Endothelial cell of umbilical vein (primary cell): ENCODE measurements at regions of chr5 and their contacts with region 1.

Region 1: DNA sequence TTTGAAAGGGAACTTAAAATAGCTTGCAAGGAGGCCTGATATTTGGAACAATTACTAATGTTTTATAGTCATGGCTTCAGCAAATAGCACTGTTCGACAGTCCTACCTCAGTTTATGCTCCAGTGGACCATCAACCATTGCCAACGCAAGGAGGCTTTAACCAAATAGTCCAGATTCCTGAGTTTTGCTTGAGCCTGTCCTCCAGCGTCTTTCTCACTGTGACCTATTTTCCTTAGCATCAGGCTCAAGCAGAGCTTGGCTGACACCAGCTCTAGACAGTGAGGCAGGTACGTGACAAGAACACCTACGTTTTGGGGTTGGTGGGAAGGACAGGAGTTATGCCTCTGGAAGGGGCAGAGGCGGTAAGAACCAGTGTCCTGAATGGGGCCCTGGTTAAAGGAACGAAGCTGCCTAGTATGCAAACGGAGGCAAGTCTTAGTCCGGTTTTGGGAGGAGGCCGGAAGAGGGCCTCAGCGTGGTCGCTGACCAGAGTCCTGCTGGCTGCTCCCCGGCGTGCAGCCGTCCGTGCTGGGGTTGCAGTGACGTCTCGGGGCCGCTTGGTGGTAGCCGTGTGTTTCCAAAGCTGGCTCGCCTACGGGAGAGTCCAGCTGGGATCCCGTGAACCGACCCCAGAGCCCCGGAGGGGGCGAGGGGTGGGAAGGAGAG is 998 bp upstream of the FGF18 start:
- DNase-seq: peak; percentile 69
- H3K4me3 ChIP-seq: peak overlapping the region in 1 of 3 experiments; percentile 23
- H3K27ac ChIP-seq: no peak overlapping the region
- H3K4me1 ChIP-seq: peaks cover 13% of the 10 kb centered on the region
- H3K27me3 ChIP-seq: peaks cover 5 to 25% of the 10 kb centered on the region in 2 experiments
- CTCF ChIP-seq: peak; percentile 87 to 96
- POLR2A ChIP-seq: no peak

Region 2: GRCh38 chr5:169826618-169827017 is 1591.8 kb before region 1 on chr5:
- CTCF ChIA-PET with region 1: no interaction called
- POLR2A ChIA-PET with region 1: no interaction called
- dilution Hi-C with region 1: no loop called
- intact Hi-C with region 1: no loop called
- DNase-seq: no peak
- H3K4me3 ChIP-seq: no peak overlapping the region
- H3K27ac ChIP-seq: no peak overlapping the region
- H3K4me1 ChIP-seq: no peaks in the 10 kb centered on the region
- H3K27me3 ChIP-seq: no peaks in the 10 kb centered on the region
- CTCF ChIP-seq: peak; percentile 8 to 10
- POLR2A ChIP-seq: no peak

Region 3: DNA sequence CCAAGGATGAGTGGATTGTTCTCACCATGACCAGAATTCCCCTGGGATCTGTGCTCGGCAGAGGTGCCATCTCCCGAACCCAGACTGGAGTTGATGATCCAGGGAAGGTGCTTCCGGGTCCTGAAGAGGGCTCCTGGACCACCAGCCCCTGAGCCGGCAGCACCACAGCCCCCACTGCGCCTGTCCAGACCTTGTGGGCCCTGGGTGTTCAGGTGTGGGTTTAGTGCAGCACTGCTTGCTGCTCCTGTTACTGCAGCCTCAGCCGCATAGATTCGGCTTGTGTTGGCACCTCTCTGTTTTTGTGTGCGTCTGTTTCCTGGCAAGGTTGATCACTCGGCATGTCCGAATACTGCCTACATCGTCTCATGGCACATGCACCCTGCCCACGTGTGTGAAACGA is 47.1 kb before region 1 on chr5:
- CTCF ChIA-PET with region 1: no interaction called
- POLR2A ChIA-PET with region 1: no interaction called
- dilution Hi-C with region 1: no loop called
- intact Hi-C with region 1: no loop called
- DNase-seq: no peak
- H3K4me3 ChIP-seq: no peak overlapping the region
- H3K27ac ChIP-seq: no peak overlapping the region
- H3K4me1 ChIP-seq: no peaks in the 10 kb centered on the region
- H3K27me3 ChIP-seq: peaks cover 0 to under 1% of the 10 kb centered on the region in 2 experiments
- CTCF ChIP-seq: no peak
- POLR2A ChIP-seq: no peak

Region 4: GRCh38 chr5:171484460-171484899 is 66.0 kb after region 1 on chr5:
- CTCF ChIA-PET with region 1: interaction called, 15 read pairs
- POLR2A ChIA-PET with region 1: no interaction called
- dilution Hi-C with region 1: no loop called
- intact Hi-C with region 1: loop called (anchors 1 kb)
- DNase-seq: peak; percentile 33
- H3K4me3 ChIP-seq: no peak overlapping the region
- H3K27ac ChIP-seq: no peak overlapping the region
- H3K4me1 ChIP-seq: no peaks in the 10 kb centered on the region
- H3K27me3 ChIP-seq: peaks cover 0 to 2% of the 10 kb centered on the region in 2 experiments
- CTCF ChIP-seq: peak; percentile 71 to 83
- POLR2A ChIP-seq: no peak

Region 5: DNA sequence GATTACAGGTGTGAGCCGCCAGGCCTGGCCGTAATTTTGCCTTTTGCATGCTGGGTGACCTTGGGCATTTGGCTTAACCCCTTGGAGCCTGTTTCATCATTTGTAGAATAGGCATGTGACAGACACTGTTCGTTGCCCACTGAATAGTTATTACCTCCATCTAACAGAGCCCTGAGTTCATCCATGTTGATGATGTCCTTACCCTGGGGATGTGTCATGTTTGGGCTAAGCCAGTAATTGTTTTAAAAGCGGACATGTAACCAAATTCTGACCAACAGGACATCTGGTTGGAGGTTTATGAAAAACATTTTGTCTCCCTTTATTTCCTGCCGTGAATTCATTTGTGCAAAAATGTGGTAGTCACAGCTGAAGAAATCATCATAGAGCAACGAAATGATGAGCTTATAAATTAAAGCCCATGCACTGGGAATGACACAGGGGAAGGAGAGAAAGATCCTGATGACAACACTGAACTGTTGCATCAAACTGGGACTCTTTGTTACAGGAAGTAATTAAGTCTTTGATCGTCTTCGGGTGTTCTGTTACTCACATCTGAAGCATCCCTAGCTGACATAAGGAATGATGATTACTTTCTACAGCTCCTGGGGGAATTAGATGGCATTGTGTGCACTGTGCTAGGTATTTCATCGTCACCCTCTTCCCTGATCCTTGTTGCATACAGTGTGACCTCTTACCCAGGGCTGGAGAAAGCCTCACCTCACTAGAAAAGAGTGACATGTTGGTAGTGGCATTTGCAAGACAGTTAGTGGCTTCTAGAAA is 118.8 kb after region 1 on chr5:
- CTCF ChIA-PET with region 1: no interaction called
- POLR2A ChIA-PET with region 1: no interaction called
- dilution Hi-C with region 1: no loop called
- intact Hi-C with region 1: no loop called
- DNase-seq: no peak
- H3K4me3 ChIP-seq: no peak overlapping the region
- H3K27ac ChIP-seq: no peak overlapping the region
- H3K4me1 ChIP-seq: no peaks in the 10 kb centered on the region
- H3K27me3 ChIP-seq: peaks cover 0 to 4% of the 10 kb centered on the region in 2 experiments
- CTCF ChIP-seq: no peak
- POLR2A ChIP-seq: no peak

Region 6: GRCh38 chr5:171630027-171630669 is 211.7 kb after region 1 on chr5:
- CTCF ChIA-PET with region 1: interaction called, 25 read pairs
- POLR2A ChIA-PET with region 1: no interaction called
- dilution Hi-C with region 1: no loop called
- intact Hi-C with region 1: loop called (anchors 1 kb)
- DNase-seq: peak; percentile 61
- H3K4me3 ChIP-seq: peak overlapping the region in 2 of 3 experiments; percentile 14 to 36
- H3K27ac ChIP-seq: no peak overlapping the region
- H3K4me1 ChIP-seq: peaks cover 9% of the 10 kb centered on the region
- H3K27me3 ChIP-seq: peaks cover 4 to 20% of the 10 kb centered on the region in 2 experiments
- CTCF ChIP-seq: peak; percentile 55 to 74
- POLR2A ChIP-seq: no peak

Region 7: GRCh38 chr5:171858303-171858702 is 439.9 kb after region 1 on chr5:
- CTCF ChIA-PET with region 1: interaction called, 39 read pairs
- POLR2A ChIA-PET with region 1: no interaction called
- dilution Hi-C with region 1: no loop called
- intact Hi-C with region 1: loop called (anchors 5 kb)
- DNase-seq: no peak
- H3K4me3 ChIP-seq: no peak overlapping the region
- H3K27ac ChIP-seq: no peak overlapping the region
- H3K4me1 ChIP-seq: no peaks in the 10 kb centered on the region
- H3K27me3 ChIP-seq: no peaks in the 10 kb centered on the region
- CTCF ChIP-seq: peak; percentile 37 to 48
- POLR2A ChIP-seq: no peak

Region 8: DNA sequence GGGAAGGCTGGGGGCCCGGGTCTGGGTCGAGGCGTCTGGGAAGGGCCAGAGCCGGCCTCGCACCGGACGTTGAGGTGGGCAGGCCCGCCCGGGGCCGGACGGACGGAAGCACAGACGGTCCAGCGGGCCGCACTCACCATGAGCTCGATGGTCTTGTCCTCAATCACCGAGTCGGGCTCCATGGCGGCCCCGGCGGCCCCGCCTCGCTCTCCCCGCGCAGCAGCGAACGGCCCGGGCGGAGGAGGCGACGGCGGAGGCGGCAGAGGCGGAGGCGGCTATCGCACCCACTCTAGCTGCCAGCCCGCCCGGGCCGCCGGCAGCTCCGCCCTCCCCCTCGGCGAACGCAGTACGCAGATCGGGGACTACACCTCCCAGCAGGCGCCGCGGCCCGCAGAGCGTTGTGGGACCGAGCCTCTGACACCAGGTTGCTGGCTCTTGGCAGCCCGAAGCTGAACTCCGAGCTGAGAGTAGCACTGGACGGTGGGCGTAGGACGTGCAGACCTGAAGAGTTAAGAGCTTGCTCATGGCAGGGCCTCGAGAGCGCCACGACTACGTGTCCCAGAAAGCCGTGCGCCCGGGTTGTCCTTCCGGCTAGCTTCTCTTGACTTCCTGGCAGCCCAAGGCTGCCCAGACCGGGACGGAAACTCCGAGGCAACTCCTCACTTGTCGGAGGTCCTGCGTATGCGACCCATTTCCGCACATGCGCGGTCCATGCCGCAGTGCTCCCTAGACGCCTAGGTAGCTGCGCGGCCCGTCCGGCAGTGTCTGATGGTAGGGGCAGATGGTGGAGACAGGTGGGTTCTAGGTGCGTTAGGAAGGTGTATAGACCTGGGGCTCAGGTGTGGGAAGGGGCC is 588.1 kb after region 1 on chr5 and contains the start of gene FBXW11:
- CTCF ChIA-PET with region 1: interaction called, 10 read pairs
- POLR2A ChIA-PET with region 1: no interaction called
- dilution Hi-C with region 1: no loop called
- intact Hi-C with region 1: loop called (anchors 2 kb)
- DNase-seq: peak; percentile 95
- H3K4me3 ChIP-seq: peak within 1 kb of the TSS; percentile 66 to 98 (median 88)
- H3K27ac ChIP-seq: peak within 1 kb of the TSS; percentile 78
- H3K4me1 ChIP-seq: peaks cover 44% of the 10 kb centered on the region
- H3K27me3 ChIP-seq: no peaks in the 10 kb centered on the region
- CTCF ChIP-seq: no peak
- POLR2A ChIP-seq: peak; percentile 96
- total RNA-seq, gene FBXW11: 42.3 and 44.7 TPM in 2 replicates

Region 9: DNA sequence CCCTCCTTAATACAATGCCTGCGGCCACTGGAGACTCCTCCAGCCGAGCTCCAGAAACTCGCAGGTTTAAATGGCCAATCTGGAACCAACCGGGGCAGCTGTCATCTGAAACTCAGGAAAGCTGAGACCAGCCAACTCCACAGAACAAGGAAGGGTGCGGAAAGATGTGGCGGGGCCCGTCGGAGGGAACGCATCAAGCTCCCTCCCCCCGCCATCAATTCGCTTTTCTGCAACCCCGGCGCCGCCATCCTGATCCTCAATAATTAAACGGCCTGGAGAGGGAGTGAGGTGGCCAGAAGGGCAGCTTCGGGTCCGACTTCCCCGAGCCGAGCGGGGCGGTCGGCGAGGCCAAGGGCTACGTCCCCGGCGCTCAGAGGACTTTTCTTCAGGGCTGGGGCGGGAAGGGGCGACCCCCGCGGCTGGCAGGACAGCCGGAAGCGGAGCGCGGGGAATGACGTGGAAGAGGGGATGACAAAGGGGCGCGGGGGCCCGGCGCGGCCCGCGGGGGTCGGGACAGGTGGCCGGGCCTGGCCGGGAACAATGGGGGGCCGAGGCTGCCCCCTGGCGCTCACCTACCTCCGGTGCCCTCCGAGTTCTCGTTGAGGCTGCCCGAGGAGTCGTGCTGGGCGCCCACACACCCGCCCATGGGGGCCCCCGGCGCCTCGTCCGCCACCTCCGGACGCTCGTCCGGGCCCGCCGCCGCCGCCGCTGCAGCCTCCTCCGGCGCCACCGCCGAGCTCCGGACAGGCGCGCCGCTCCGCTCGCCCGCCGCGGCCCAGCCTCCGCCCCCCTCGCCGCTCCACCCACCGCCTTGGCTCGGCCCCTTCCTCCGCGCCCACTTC is 864.8 kb after region 1 on chr5 and contains the start of gene UBTD2:
- CTCF ChIA-PET with region 1: interaction called, 6 read pairs
- POLR2A ChIA-PET with region 1: no interaction called
- dilution Hi-C with region 1: no loop called
- intact Hi-C with region 1: loop called (anchors 5 kb)
- DNase-seq: peak; percentile 79
- H3K4me3 ChIP-seq: peak within 1 kb of the TSS; percentile 73 to 93 (median 92)
- H3K27ac ChIP-seq: peak within 1 kb of the TSS; percentile 82
- H3K4me1 ChIP-seq: peaks cover 21% of the 10 kb centered on the region
- H3K27me3 ChIP-seq: no peaks in the 10 kb centered on the region
- CTCF ChIP-seq: peak; percentile 35 to 65
- POLR2A ChIP-seq: peak; percentile 84
- total RNA-seq, gene UBTD2: 21.6 and 22.6 TPM in 2 replicates